Cardiac septum (tissue), 1 donor: ENCODE measurements at regions of chr4 and their contacts with region 1.

Region 1: GRCh38 chr4:113584407-113585150 is 177.0 kb downstream of the CAMK2D start:
- DNase-seq: no peak

Region 2: GRCh38 chr4:113547487-113548042 is 37.0 kb before region 1 on chr4:
- intact Hi-C with region 1: loop called (anchors 5 kb)
- DNase-seq: peak; percentile 91

Region 3: DNA sequence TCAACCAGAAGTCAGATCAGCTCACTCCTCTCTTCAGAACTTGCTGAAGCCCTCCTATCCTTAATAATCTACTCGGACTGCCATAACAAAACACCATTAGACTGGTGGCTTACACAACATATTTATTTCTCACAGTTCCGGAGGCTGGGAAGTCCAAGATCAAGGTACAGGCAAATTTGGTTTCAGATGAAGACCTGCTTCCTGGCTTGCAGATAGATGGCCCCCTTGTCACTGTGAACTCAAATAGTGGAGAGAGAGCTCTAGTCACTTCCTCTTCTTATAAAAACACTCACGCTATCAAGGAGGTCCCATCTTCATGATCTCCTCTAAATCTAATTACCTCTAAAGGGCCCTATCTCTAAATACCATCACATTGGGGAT is 51.8 kb after region 1 on chr4:
- intact Hi-C with region 1: loop called (anchors 2 kb)
- DNase-seq: no peak

Region 4: DNA sequence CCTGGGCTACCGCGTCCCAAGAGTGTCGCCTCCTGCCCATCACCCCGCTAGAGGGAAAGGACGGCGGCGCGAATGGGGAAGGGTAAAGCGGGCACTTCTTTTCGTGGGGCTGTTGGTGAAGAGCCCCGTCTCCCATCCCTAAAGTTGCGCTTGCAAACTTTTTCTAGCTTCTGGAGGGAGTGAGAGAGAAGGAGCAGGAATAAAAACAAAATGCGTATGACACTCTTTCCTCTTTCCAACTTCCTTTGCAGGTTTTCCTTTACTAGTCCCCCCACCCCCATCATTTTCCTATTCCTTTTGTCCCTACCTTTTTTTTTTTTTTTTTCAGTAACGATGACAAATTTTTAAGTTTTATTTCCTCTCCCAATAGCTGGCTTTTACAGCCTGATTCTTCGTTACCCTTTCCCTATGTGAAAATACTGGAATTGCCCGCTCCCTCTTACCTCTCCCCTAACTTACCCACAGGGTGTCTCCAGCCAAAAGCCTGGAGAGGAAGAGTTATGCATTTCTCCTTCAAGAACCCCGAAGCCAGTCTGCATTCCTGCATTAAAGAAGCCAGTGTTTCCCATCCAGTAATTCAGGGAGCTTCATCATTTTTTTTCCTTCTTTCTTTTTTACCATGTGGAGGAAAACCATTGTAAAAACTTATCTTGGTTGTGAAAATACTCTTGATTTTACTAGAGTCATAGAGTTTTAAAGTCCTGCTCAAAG is 395.5 kb after region 1 on chr4:
- intact Hi-C with region 1: no loop called
- DNase-seq: no peak